ENCODE measurements at regions of chr15 and their contacts with region 1.

Region 1: GRCh38 chr15:60916679-60917460 is 312.2 kb downstream of the RORA start:
- DNase-seq: peak; percentile 68 to 92 (median 82)
- H3K4me3 ChIP-seq: peak overlapping the region in 27 of 59 donors; percentile 0 to 41 (median 19)
- H3K27ac ChIP-seq: peak overlapping the region in 53 of 59 donors; percentile 3 to 86 (median 68)
- H3K27me3 ChIP-seq: no peaks in the 10 kb centered on the region
- CTCF ChIP-seq: peak; percentile 66 to 96 (median 89)

Region 2: GRCh38 chr15:60507596-60508424 is 409.1 kb before region 1 on chr15:
- intact Hi-C with region 1: loop called in 1 of 2 experiments (anchors 10 kb)
- DNase-seq: peak in 2 of 10 donors; percentile 42 to 46
- H3K4me3 ChIP-seq: no peak overlapping the region
- H3K27ac ChIP-seq: peak overlapping the region in 3 of 59 donors; percentile 14 to 46 (median 34)
- H3K27me3 ChIP-seq: no peaks in the 10 kb centered on the region
- CTCF ChIP-seq: peak; percentile 80 to 97 (median 92)

Region 3: DNA sequence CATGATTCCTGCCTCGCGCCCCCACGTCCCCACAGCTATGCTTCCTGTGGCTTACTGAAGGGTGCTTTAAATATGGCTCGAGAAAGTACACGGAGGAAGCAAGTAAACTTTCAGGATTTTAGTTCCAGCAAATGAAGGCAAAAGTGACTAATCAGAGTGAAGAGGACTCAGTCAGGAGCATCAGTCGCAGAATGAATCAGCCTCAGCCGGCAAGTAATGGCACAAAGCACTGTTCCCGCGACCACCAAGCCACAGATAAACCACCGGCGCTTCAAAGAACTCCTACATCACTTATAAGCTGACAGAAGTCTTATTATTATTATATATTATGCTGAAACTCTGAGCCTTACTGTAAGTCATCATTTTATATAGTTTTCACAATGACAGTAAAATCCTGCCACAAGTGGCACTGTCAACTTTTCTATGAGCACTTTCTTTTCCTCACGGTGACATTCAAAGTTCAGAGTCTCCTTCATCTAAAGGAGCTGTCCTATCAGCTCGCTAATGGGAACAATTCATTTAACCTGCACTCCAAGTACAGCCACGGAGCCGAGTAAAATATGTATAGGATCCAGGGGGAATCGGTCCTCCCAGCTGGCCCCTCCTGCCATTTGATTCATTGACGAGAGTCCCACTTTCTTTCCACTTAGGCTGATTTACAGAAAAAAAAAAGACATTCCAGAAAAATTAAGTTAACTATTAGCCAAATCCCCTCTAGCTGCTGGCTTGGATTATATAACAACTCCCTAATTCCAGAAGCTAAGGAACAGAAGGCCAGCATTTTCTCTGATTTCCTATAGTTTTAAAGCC is 221.0 kb before region 1 on chr15:
- intact Hi-C with region 1: no loop called
- DNase-seq: no peak
- H3K4me3 ChIP-seq: no peak overlapping the region
- H3K27ac ChIP-seq: no peak overlapping the region
- H3K27me3 ChIP-seq: no peaks in the 10 kb centered on the region
- CTCF ChIP-seq: no peak